PC-3 (cell line): ENCODE measurements at regions of chr5 and their contacts with region 1.

Region 1: GRCh38 chr5:98454904-98455303 is 318.6 kb upstream of the RGMB start:
- DNase-seq: peak; percentile 97
- ATAC-seq: peak; percentile 98
- H3K4me3 ChIP-seq: peak overlapping the region; percentile 48
- H3K27ac ChIP-seq: peak overlapping the region; percentile 54
- H3K4me1 ChIP-seq: peaks cover 18% of the 10 kb centered on the region
- H3K27me3 ChIP-seq: no peaks in the 10 kb centered on the region
- CTCF ChIP-seq: peak; percentile 78

Region 2: DNA sequence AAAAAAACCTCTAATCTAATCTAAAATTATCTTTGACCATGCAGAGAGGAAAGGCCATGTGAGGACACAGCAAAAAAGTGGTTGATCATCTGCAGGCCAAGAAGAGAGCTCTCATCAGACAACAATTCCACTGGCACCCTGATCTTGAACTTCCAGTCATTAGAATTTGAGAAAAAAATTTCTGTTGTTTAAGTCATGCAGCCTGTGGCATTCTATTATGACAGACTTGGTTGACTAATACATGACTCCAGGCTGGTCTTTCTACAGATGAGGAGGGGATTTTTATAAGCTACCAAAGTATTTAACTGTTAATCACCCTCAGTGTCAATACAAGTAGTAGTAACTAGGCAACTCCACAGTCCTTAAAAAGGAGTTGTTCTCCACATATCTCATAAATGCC is 40.0 kb before region 1 on chr5:
- CTCF ChIA-PET with region 1: interaction called, 4 read pairs
- POLR2A ChIA-PET with region 1: no interaction called
- intact Hi-C with region 1: loop called (anchors 2 kb)
- DNase-seq: peak; percentile 96
- ATAC-seq: peak; percentile 95
- H3K4me3 ChIP-seq: no peak overlapping the region
- H3K27ac ChIP-seq: peak overlapping the region; percentile 92
- H3K4me1 ChIP-seq: peaks cover 33% of the 10 kb centered on the region
- H3K27me3 ChIP-seq: no peaks in the 10 kb centered on the region
- CTCF ChIP-seq: no peak

Region 3: GRCh38 chr5:98581112-98581997 is 126.5 kb after region 1 on chr5:
- CTCF ChIA-PET with region 1: interaction called, 10 read pairs
- POLR2A ChIA-PET with region 1: no interaction called
- intact Hi-C with region 1: no loop called
- DNase-seq: peak; percentile 32
- ATAC-seq: peak; percentile 51; the same call in 1 of the 2 replicates
- H3K4me3 ChIP-seq: no peak overlapping the region
- H3K27ac ChIP-seq: no peak overlapping the region
- H3K4me1 ChIP-seq: peaks cover 14% of the 10 kb centered on the region
- H3K27me3 ChIP-seq: no peaks in the 10 kb centered on the region
- CTCF ChIP-seq: no peak

Region 4: DNA sequence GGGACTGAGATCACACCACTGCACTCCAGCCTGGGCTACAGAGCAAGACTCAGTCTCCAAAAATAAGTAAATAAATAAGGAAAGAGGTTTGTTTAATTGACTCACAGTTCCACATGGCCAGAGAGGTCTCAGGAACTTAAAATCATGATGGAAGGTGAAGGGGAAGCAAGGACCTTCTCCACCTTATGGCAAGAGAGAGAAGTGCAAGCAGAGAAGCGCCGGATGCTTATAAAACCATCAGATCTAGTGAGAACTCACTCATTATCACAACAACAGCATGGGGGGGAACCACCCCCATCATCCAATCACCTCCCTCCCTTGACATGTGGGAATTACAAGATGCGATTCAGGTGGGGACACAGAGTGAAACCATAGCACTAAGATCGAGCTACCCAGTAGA is 295.8 kb after region 1 on chr5:
- CTCF ChIA-PET with region 1: interaction called, 4 read pairs
- POLR2A ChIA-PET with region 1: no interaction called
- intact Hi-C with region 1: loop called (anchors 1 kb)
- DNase-seq: peak; percentile 46
- ATAC-seq: peak; percentile 16; the same call in 1 of the 2 replicates
- H3K4me3 ChIP-seq: no peak overlapping the region
- H3K27ac ChIP-seq: no peak overlapping the region
- H3K4me1 ChIP-seq: peaks cover 21% of the 10 kb centered on the region
- H3K27me3 ChIP-seq: no peaks in the 10 kb centered on the region
- CTCF ChIP-seq: peak; percentile 61

Region 5: DNA sequence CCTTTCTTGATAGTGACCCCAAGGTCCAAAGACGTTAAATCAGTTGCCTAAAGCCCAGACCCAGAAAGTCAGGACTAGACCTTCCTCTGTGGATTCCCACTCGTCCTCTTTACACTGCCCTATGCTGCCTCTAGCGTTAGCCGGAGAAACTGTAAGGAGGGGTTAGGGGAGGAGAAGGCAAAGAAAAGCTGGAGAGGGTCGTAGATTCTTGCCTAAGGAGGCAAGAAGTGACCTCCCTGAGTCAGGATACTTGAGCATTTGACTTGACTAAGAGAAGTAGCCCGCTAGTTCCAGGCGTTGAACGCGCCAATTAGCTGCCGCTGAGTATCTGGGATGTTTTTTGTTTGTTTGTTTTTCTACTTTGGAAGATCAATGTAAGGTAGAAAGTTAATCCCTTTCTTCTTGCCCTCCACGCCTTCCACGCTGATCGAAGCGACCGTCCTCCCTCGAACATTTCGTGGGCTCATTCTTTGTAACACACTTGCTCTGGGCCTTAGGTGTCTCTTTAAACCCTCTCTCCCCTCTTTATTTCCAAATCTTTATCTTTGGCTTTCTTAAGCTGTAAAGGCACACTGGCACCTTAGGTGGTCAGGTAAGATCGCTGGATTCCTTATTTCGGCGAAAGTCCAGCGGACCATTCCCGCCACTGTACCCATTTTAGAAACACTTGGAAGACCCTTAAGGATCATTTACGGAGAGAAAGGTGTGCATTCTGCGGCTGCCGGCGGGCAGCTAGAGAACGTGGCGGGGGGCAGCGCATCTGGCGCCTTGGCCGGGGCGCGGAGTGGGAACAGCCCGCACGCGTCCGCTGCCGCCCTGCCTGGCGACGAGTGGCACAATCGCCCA is 313.5 kb after region 1 on chr5:
- CTCF ChIA-PET with region 1: interaction called, 37 read pairs
- POLR2A ChIA-PET with region 1: no interaction called
- intact Hi-C with region 1: loop called (anchors 1 kb)
- DNase-seq: peak; percentile 80
- ATAC-seq: peak; percentile 29
- H3K4me3 ChIP-seq: peak overlapping the region; percentile 89
- H3K27ac ChIP-seq: no peak overlapping the region
- H3K4me1 ChIP-seq: peaks cover 14% of the 10 kb centered on the region
- H3K27me3 ChIP-seq: no peaks in the 10 kb centered on the region
- CTCF ChIP-seq: peak; percentile 98

Region 6: GRCh38 chr5:98796197-98796972 is 341.5 kb after region 1 on chr5:
- CTCF ChIA-PET with region 1: interaction called, 6 read pairs
- POLR2A ChIA-PET with region 1: no interaction called
- intact Hi-C with region 1: loop called (anchors 1 kb)
- DNase-seq: peak; percentile 90
- ATAC-seq: peak; percentile 98
- H3K4me3 ChIP-seq: peak overlapping the region; percentile 16; the same call in 1 of the 2 replicates
- H3K27ac ChIP-seq: peak overlapping the region; percentile 33
- H3K4me1 ChIP-seq: peaks cover 12% of the 10 kb centered on the region
- H3K27me3 ChIP-seq: no peaks in the 10 kb centered on the region
- CTCF ChIP-seq: peak; percentile 93

Region 7: DNA sequence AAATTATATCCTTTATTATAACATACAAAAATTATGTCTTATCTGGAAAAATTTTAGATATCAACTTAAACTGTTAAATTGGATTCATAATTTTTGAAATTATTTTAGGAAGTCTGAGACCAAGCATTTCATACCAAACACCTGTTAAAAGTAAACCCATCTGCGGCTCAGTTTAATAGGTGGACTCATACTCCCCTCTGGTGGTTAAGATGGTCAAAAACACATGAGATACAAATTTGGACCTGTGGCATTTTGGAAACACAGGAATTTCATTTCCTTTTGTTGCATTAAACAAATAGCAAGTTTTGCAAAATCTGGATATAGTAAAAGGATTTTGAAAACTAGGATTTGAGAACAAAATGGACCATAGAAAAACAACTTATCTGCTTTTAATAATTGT is 372.3 kb after region 1 on chr5:
- CTCF ChIA-PET with region 1: no interaction called
- POLR2A ChIA-PET with region 1: no interaction called
- intact Hi-C with region 1: loop called (anchors 1 kb)
- DNase-seq: peak; percentile 80
- ATAC-seq: peak; percentile 91
- H3K4me3 ChIP-seq: no peak overlapping the region
- H3K27ac ChIP-seq: no peak overlapping the region
- H3K4me1 ChIP-seq: no peaks in the 10 kb centered on the region
- H3K27me3 ChIP-seq: no peaks in the 10 kb centered on the region
- CTCF ChIP-seq: peak; percentile 94